Right lobe of liver (tissue), 6 donors: ENCODE measurements at regions of chr16 and their contacts with region 1.

Region 1: DNA sequence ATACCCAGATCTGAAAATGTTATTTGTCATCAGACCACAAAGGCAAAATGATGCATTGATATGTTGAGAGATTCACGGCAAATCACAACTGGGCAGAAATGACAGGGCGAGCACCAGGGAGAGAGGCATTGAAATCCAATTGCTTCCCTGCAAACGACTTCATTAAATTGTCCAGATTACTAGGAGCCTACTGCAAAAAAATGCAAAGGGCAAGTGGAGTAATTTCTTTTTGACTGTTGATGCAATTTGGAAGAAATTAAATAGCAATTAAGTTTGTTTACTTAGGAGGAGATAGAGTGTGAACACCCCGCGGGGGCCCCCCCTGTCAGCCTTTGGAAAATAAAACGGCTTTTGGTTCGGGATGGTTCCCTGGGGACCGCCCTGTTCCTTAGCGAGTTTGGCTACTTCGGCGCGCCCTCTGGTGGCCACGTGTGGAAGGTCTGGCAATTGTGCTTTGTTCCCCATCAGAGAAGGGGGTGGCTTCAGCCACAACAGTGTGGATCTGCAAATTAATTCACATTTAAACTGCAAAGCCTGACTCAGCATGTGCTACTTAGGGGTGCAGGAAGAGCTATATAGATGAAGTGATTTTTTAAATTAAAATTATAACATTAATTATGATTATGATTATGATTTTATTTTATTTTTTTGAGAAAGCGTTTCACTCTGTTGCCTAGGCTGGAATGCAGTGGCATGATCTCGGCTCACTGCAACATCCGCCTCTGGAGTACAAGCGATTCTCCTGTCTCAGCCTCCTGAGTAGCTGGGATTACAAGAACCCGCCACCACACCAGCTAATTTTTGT is 14.5 kb upstream of the TMC7 start:
- DNase-seq: peak; percentile 80 to 86 (median 86)
- ATAC-seq: peak; percentile 98 to 100 (median 100)
- H3K4me3 ChIP-seq: peak overlapping the region in 2 of 3 donors; percentile 23 to 26
- H3K27ac ChIP-seq: no peak overlapping the region
- H3K4me1 ChIP-seq: no peaks in the 10 kb centered on the region
- H3K27me3 ChIP-seq: no peaks in the 10 kb centered on the region
- CTCF ChIP-seq: peak; percentile 81 to 97 (median 95)
- POLR2A ChIP-seq: no peak

Region 2: DNA sequence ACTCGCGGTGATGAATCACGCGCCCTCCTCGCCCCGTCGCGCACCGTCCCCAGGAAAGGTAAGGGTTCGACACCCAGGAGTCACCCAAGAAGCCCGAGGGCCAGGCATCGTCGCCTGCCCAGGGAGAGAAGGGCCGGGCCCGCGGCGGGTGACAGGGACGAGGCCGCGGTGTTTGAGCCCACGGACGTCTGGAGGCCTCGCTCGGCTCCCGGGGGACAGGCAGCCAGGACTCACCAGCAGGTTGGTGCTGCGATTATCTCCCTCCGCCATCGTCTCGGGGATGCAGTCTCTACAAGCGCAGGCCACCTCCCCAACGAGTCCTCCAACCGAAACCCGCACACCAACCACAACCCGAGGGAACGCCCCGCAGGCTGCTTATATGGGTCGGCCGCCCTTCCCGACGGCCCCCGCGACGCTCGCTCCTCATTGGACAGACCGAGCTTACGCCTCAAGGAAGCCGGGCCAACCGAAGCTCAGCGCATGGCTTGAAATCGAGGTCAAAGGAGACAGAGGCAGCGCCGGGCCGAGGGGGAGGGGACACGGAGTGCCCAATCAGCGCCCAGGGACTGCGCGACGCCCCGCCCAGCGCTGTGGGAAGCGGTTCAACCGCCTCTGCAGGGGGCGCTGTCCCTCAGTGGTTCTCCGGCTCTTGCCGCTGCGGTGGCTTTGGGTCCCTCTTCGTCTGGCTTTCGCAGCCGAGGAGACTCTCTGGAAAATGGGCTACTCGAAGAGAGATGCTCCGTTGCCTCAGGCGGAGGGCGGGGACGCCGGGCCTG is 167.9 kb before region 1 on chr16 and contains the start of gene ARL6IP1:
- intact Hi-C with region 1: loop called in 1 of 2 experiments (anchors 10 kb)
- DNase-seq: peak; percentile 99
- ATAC-seq: peak; percentile 95 to 99 (median 97)
- H3K4me3 ChIP-seq: peak within 1 kb of the TSS; percentile 87 to 98 (median 94)
- H3K27ac ChIP-seq: peak within 1 kb of the TSS; percentile 88 to 92 (median 91)
- H3K4me1 ChIP-seq: peaks cover 0 to 39% (median 16%) of the 10 kb centered on the region in 4 donors
- H3K27me3 ChIP-seq: no peaks in the 10 kb centered on the region
- CTCF ChIP-seq: peak; percentile 96 to 99 (median 98)
- POLR2A ChIP-seq: peak; percentile 100
- total RNA-seq, gene ARL6IP1: 103 to 160 (median 109) TPM

Region 3: GRCh38 chr16:19113453-19114351 is 144.4 kb after region 1 on chr16 and contains the start of gene ITPRIPL2:
- intact Hi-C with region 1: no loop called
- DNase-seq: peak; percentile 86 to 89 (median 87)
- ATAC-seq: peak; percentile 76 to 85 (median 80)
- H3K4me3 ChIP-seq: peak within 1 kb of the TSS; percentile 65 to 82 (median 77)
- H3K27ac ChIP-seq: peak within 1 kb of the TSS; percentile 77 to 92 (median 86)
- H3K4me1 ChIP-seq: peaks cover 0 to 63% (median 9%) of the 10 kb centered on the region in 4 donors
- H3K27me3 ChIP-seq: no peaks in the 10 kb centered on the region
- CTCF ChIP-seq: no peak
- POLR2A ChIP-seq: peak; percentile 83
- total RNA-seq, gene ITPRIPL2: 12.2 to 23.5 (median 17.7) TPM